Tibial artery (tissue), 4 donors: ENCODE measurements at regions of chr15 and their contacts with region 1.

Region 1: DNA sequence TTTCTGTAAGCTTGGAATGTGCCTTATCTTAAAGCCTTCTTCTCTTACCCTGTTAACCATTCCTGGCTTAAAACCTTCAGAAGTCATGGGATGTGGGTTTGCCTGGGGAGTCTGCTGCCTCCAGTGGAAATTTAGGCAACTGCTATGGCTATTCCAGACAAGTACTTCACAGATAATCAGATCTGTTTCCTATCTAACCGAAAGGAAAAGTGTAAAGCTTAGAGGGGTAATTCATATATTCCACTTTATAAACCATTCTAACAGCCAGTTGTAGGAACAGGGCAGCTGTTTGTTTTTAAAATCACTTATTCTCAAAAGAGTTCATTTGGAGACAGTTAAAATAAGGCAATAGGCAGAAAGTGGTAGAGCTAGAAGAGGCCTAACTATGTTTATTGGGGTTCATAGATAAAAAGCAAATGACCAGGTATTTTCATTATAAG is 219.9 kb downstream of the TCF12 start:
- DNase-seq: no peak
- H3K4me3 ChIP-seq: no peak overlapping the region
- H3K27ac ChIP-seq: no peak overlapping the region
- H3K4me1 ChIP-seq: peaks cover 0 to 14% (median 4%) of the 10 kb centered on the region in 4 donors
- H3K27me3 ChIP-seq: no peaks in the 10 kb centered on the region
- CTCF ChIP-seq: peak; percentile 66 to 68

Region 2: DNA sequence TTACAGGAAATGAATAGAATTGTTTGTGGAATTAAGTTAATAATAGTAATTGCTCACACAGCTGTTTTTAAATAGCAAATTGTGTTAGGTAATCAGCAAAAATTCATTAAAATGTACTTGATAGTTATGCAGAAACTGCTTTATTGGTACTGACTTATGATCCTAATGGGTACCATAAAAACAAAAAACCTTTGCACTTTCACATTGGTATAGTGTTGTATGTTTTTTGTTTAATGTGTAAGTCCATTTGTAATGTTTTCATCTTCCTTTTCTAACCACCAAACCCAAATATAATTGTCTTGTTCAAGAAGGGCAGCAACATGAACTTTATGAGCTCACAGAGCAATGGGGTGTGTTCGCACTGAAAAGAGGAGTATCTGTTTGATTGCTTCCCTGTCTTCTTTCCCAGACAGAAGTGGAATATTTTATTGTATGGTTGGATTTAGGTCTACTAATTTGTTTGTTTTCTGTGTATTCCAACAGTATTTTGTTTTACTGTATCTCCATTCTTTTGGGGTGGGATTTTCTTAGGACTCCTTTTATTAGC is 84.1 kb before region 1 on chr15:
- intact Hi-C with region 1: no loop called
- DNase-seq: no peak
- H3K4me3 ChIP-seq: no peak overlapping the region
- H3K27ac ChIP-seq: no peak overlapping the region
- H3K4me1 ChIP-seq: peaks cover 0 to 38% (median 13%) of the 10 kb centered on the region in 4 donors
- H3K27me3 ChIP-seq: no peaks in the 10 kb centered on the region
- CTCF ChIP-seq: no peak

Region 3: GRCh38 chr15:57069423-57069822 is 68.9 kb before region 1 on chr15:
- intact Hi-C with region 1: no loop called
- DNase-seq: no peak
- H3K4me3 ChIP-seq: no peak overlapping the region
- H3K27ac ChIP-seq: no peak overlapping the region
- H3K4me1 ChIP-seq: peaks cover 0 to 36% (median 4%) of the 10 kb centered on the region in 4 donors
- H3K27me3 ChIP-seq: no peaks in the 10 kb centered on the region
- CTCF ChIP-seq: no peak

Region 4: GRCh38 chr15:57727031-57727430 is 588.7 kb after region 1 on chr15:
- intact Hi-C with region 1: loop called (anchors 5 kb)
- DNase-seq: no peak
- H3K4me3 ChIP-seq: no peak overlapping the region
- H3K27ac ChIP-seq: no peak overlapping the region
- H3K4me1 ChIP-seq: peaks cover 0 to 6% (median 2%) of the 10 kb centered on the region in 4 donors
- H3K27me3 ChIP-seq: no peaks in the 10 kb centered on the region
- CTCF ChIP-seq: no peak